ENCODE measurements at regions of chr2 and their contacts with region 1.

Region 1: DNA sequence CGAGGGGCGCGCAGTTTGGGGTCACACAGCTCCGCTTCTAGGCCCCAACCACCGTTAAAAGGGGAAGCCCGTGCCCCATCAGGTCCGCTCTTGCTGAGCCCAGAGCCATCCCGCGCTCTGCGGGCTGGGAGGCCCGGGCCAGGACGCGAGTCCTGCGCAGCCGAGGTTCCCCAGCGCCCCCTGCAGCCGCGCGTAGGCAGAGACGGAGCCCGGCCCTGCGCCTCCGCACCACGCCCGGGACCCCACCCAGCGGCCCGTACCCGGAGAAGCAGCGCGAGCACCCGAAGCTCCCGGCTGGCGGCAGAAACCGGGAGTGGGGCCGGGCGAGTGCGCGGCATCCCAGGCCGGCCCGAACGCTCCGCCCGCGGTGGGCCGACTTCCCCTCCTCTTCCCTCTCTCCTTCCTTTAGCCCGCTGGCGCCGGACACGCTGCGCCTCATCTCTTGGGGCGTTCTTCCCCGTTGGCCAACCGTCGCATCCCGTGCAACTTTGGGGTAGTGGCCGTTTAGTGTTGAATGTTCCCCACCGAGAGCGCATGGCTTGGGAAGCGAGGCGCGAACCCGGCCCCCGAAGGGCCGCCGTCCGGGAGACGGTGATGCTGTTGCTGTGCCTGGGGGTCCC is at the start of gene ITGA4:
- DNase-seq: peak in 9 of 10 donors; percentile 76 to 90 (median 86)
- ATAC-seq: peak; percentile 81 to 85
- H3K4me3 Mint-ChIP-seq: peak within 1 kb of the TSS; percentile 91 to 99 (median 96)
- H3K27ac Mint-ChIP-seq: peak within 1 kb of the TSS; percentile 95 to 99 (median 97)
- H3K4me1 Mint-ChIP-seq: peaks cover 33 to 55% (median 44%) of the 10 kb centered on the region in 4 donors
- H3K27me3 Mint-ChIP-seq: no peaks in the 10 kb centered on the region
- polyA plus RNA-seq, gene ITGA4: 88.1 to 128 (median 121) TPM

Region 2: GRCh38 chr2:181104512-181105115 is 352.6 kb before region 1 on chr2:
- POLR2A ChIA-PET with region 1: interaction called, 53 read pairs
- DNase-seq: peak in 6 of 10 donors; percentile 29 to 64 (median 58)
- ATAC-seq: peak; percentile 38 to 52
- H3K4me3 Mint-ChIP-seq: peak overlapping the region in 4 of 10 donors; percentile 4 to 36 (median 12)
- H3K27ac Mint-ChIP-seq: peak overlapping the region; percentile 5 to 86 (median 60)
- H3K4me1 Mint-ChIP-seq: peaks cover 12 to 38% (median 35%) of the 10 kb centered on the region in 4 donors
- H3K27me3 Mint-ChIP-seq: no peaks in the 10 kb centered on the region

Region 3: DNA sequence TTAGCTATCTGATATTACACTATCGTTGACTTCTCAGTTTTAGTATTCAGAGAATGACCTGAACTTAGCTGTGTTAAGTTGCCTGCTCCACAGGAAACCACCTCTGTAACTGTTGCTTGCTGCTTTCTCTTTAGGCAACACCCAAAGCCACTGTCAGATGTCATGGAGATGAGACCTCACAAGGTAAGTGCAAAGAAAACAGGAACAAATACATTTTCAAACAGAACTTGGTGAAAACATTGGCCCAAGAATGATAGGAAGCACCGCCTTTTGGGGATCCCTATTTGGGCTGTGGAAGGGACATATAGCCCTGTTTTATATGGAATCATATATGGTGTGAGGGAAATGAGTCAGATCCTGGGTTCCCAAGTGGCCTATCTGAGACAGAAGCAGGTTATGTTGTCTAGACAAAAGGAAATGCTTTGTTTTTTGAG is 333.4 kb before region 1 on chr2:
- POLR2A ChIA-PET with region 1: interaction called, 22 read pairs
- DNase-seq: peak; percentile 8 to 89 (median 78)
- ATAC-seq: peak; percentile 90 to 98
- H3K4me3 Mint-ChIP-seq: peak overlapping the region; percentile 61 to 91 (median 81)
- H3K27ac Mint-ChIP-seq: peak overlapping the region; percentile 96 to 100 (median 98)
- H3K4me1 Mint-ChIP-seq: peaks cover 23 to 74% (median 65%) of the 10 kb centered on the region in 4 donors
- H3K27me3 Mint-ChIP-seq: no peaks in the 10 kb centered on the region

Region 4: GRCh38 chr2:181140414-181140813 is 316.8 kb before region 1 on chr2:
- POLR2A ChIA-PET with region 1: interaction called, 36 read pairs
- DNase-seq: peak in 1 of 10 donors; percentile 14
- ATAC-seq: peak; percentile 12 to 13
- H3K4me3 Mint-ChIP-seq: peak overlapping the region in 9 of 10 donors; percentile 49 to 92 (median 77)
- H3K27ac Mint-ChIP-seq: peak overlapping the region; percentile 93 to 99 (median 96)
- H3K4me1 Mint-ChIP-seq: peaks cover 31 to 79% (median 70%) of the 10 kb centered on the region in 4 donors
- H3K27me3 Mint-ChIP-seq: no peaks in the 10 kb centered on the region

Region 5: GRCh38 chr2:181193550-181193949 is 263.7 kb before region 1 on chr2:
- POLR2A ChIA-PET with region 1: interaction called, 11 read pairs
- DNase-seq: no peak
- ATAC-seq: no peak
- H3K4me3 Mint-ChIP-seq: peak overlapping the region in 1 of 10 donors; percentile 28
- H3K27ac Mint-ChIP-seq: peak overlapping the region in 4 of 10 donors; percentile 4 to 39 (median 18)
- H3K4me1 Mint-ChIP-seq: peaks cover 16 to 56% (median 50%) of the 10 kb centered on the region in 4 donors
- H3K27me3 Mint-ChIP-seq: no peaks in the 10 kb centered on the region

Region 6: DNA sequence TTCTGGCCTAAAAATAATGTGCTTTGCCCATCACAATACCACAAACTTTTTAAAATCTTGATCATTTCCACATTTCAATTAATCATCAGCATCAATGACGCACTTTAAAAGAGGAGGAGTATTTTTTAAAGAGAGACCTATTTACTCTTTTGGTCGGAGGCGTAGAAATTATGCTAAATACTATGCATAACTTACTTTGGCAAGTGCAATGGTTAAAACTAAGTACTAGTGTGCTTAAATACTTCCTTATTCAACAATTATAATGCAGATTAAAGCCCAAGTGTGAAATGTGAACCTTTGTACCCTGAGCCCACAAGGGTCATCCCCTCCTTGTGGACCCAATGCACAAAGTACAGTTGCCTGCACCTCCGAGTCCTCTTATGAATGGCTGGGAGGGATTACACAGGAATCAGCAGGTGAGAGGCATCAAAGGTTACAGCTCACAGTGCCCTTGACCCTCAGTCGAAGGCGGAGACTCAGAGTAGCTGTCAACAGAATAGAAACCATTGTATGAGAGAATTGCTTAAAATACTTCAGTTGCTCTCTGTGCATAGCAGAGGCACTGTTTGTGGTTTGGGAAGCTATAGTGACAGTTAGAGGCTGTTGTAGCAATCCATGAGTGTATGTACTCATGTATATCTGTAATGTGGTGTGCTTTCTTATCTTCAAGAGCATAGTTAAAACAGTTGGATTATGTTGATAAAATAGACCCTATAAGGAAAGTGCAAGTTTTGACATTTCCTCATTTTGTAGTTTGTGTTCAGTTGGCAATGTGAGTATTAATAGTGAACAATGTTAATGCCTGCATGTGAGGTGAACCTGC is 151.7 kb before region 1 on chr2:
- POLR2A ChIA-PET with region 1: interaction called, 128 read pairs
- DNase-seq: peak in 9 of 10 donors; percentile 5 to 75 (median 44)
- ATAC-seq: peak; percentile 68 to 75
- H3K4me3 Mint-ChIP-seq: peak overlapping the region; percentile 52 to 92 (median 74)
- H3K27ac Mint-ChIP-seq: peak overlapping the region; percentile 92 to 100 (median 96)
- H3K4me1 Mint-ChIP-seq: peaks cover 43 to 84% (median 73%) of the 10 kb centered on the region in 4 donors
- H3K27me3 Mint-ChIP-seq: no peaks in the 10 kb centered on the region

Region 7: DNA sequence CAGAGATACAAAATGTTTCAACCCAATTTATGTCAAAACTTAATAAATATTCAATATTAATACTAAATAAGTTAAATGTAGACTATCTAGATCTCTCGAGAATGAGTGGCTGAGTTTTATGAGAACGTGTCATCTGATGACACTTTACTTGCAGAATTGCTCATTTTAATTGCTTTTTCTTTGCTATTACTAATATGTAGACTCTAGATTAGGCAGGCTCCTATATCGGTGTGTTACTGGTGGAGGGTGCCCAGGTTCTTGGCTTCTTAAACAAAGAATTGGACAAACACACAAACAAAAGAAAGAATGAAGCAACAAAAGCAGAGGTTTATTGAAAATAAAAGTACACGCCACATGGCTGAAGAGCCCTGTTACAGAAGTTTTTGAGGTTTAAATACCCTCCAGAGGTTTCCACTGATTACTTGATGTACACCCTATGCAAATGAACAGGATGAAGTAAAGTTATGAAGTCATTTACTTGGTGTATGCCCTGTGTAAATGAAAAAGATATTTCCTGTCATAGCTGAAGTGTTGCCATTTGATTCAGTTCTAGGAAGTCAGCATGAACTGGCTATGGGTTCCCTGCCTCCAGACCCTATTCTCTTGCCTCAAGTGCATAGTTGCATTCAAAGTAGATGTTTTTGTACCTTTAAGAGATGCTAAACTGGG is 122.9 kb before region 1 on chr2:
- POLR2A ChIA-PET with region 1: no interaction called
- DNase-seq: no peak
- ATAC-seq: peak in 1 of 2 donors; percentile 32
- H3K4me3 Mint-ChIP-seq: no peak overlapping the region
- H3K27ac Mint-ChIP-seq: peak overlapping the region in 1 of 10 donors; percentile 74
- H3K4me1 Mint-ChIP-seq: peaks cover 6 to 13% (median 9%) of the 10 kb centered on the region in 4 donors
- H3K27me3 Mint-ChIP-seq: no peaks in the 10 kb centered on the region

Region 8: GRCh38 chr2:181440919-181441318 is 16.3 kb before region 1 on chr2:
- POLR2A ChIA-PET with region 1: interaction called, 10 read pairs
- DNase-seq: no peak
- ATAC-seq: peak in 1 of 2 donors; percentile 44
- H3K4me3 Mint-ChIP-seq: no peak overlapping the region
- H3K27ac Mint-ChIP-seq: peak overlapping the region in 3 of 10 donors; percentile 1 to 8 (median 4)
- H3K4me1 Mint-ChIP-seq: peaks cover 13 to 34% (median 29%) of the 10 kb centered on the region in 4 donors
- H3K27me3 Mint-ChIP-seq: no peaks in the 10 kb centered on the region